ENCODE measurements at regions of chr3 and their contacts with region 1.

Region 1: DNA sequence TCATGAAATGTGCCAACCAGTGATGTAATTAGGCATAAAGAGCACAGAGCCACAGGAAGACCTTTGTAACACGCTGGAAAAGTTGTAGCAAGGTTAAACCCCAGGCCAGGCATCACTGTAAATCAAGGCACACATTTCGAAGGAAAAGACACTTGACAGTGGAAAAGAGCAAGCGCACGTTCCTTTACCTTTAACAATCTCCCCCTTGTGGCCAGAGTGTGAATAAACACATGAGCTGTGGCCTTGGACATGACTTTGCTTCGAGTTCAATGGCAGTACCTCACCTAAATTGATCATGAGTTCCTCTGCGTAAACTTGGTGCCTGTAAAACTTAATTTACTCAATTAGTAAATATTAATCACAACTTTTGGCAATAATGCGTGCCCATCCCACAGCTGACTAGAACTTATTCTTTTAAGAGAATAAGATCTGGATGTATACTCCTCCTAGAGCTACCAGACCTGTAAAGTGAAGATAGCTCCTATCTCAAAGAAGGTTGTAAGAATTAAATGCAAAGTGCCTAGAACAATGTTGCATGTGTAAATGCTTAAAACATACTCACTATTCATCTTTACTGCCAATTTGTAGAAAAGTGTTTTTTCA is 757.0 kb upstream of the NECTIN3 start:
- DNase-seq: peak; percentile 10 to 67
- H3K4me3 ChIP-seq: no peak overlapping the region
- H3K27ac ChIP-seq: no peak overlapping the region
- H3K4me1 ChIP-seq: peaks cover 0 to 2% (median 0%) of the 10 kb centered on the region in 4 experiments; a peak in 1 of 7 replicates
- H3K27me3 ChIP-seq: no peaks in the 10 kb centered on the region
- CTCF ChIP-seq: peak; percentile 5 to 91 (median 66)
- EP300 ChIP-seq: no peak
- POLR2A ChIP-seq: no peak
- RAD21 ChIP-seq: peak; percentile 79 to 85

Region 2: DNA sequence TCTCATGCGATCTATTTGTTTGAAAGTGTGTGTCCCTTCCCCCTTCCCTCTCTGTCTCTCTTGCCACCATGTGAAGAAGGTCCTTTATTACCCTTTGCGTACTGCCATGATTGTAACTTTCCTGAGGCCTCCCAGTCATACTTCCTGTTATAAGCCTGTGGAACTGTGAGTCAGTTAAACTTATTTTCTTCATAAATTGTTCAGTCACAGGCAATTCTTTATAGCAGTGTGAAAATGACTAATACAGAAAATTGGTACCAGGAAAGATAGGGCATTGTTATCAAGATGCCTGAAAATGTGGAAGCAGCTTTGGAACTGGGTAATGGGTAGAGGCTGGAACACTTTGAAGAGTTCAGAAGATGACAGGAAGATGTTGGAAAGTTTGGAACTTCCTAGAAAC is 13.3 kb after region 1 on chr3:
- CTCF ChIA-PET with region 1: interaction called, 17 read pairs
- POLR2A ChIA-PET with region 1: no interaction called
- DNase-seq: no peak
- H3K4me3 ChIP-seq: no peak overlapping the region
- H3K27ac ChIP-seq: no peak overlapping the region
- H3K4me1 ChIP-seq: peaks cover 0 to 2% (median 0%) of the 10 kb centered on the region in 4 experiments; a peak in 1 of 7 replicates
- H3K27me3 ChIP-seq: no peaks in the 10 kb centered on the region
- CTCF ChIP-seq: no peak
- EP300 ChIP-seq: no peak
- POLR2A ChIP-seq: no peak
- RAD21 ChIP-seq: no peak